ENCODE measurements at regions of chr6 and their contacts with region 1.

Region 1: GRCh38 chr6:116287689-116288282 is 8.1 kb upstream of the TSPYL1 start:
- DNase-seq: no peak
- CTCF ChIP-seq: peak; percentile 87

Region 2: GRCh38 chr6:116268589-116269293 is 19.0 kb before region 1 on chr6:
- CTCF ChIA-PET with region 1: interaction called, 25 read pairs
- POLR2A ChIA-PET with region 1: no interaction called
- DNase-seq: peak; percentile 41
- CTCF ChIP-seq: peak; percentile 80

Region 3: GRCh38 chr6:116352515-116353471 is 65.0 kb after region 1 on chr6:
- CTCF ChIA-PET with region 1: interaction called, 23 read pairs
- POLR2A ChIA-PET with region 1: no interaction called
- DNase-seq: no peak
- CTCF ChIP-seq: no peak

Region 4: DNA sequence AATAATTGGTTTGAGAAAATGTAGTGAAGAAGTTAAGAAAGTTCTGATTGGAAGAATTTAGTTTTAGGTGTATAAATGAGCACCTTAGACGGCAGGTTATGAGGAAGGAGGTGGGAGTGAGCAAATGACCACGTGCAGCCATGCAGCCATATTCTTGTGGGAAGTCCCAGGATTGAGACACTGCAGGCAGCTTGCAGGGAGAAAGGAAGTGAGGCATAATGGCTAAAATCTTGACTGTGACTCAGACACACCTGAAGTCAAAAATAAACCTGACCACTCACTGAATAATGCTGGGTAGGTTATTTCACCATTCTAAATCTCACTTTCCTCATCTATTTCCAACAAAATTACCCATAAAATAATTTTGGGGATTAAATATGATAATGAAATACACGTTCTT is 99.6 kb after region 1 on chr6:
- CTCF ChIA-PET with region 1: interaction called, 10 read pairs
- POLR2A ChIA-PET with region 1: no interaction called
- DNase-seq: peak; percentile 25
- CTCF ChIP-seq: no peak

Region 5: GRCh38 chr6:116518621-116519368 is 231.0 kb after region 1 on chr6:
- CTCF ChIA-PET with region 1: interaction called, 23 read pairs
- POLR2A ChIA-PET with region 1: no interaction called
- DNase-seq: no peak
- CTCF ChIP-seq: no peak

Region 6: GRCh38 chr6:116556065-116556464 is 268.3 kb after region 1 on chr6:
- CTCF ChIA-PET with region 1: interaction called, 57 read pairs
- POLR2A ChIA-PET with region 1: no interaction called
- DNase-seq: no peak
- CTCF ChIP-seq: no peak